WTC11 (cell line): ENCODE measurements at regions of chr5 and their contacts with region 1.

Region 1: GRCh38 chr5:36079200-36079761 is 12.6 kb upstream of the UGT3A2 start:
- DNase-seq: peak; percentile 31
- ATAC-seq: peak; percentile 99
- H3K4me3 Mint-ChIP-seq: peak overlapping the region; percentile 38
- H3K27ac Mint-ChIP-seq: peak overlapping the region; percentile 24
- H3K4me1 Mint-ChIP-seq: peaks cover 21% of the 10 kb centered on the region
- H3K27me3 Mint-ChIP-seq: no peaks in the 10 kb centered on the region; the same call in 1 of the 2 replicates
- CTCF ChIP-seq: peak; percentile 64

Region 2: GRCh38 chr5:35904443-35905132 is 174.7 kb before region 1 on chr5:
- CTCF ChIA-PET with region 1: no interaction called
- POLR2A ChIA-PET with region 1: no interaction called
- DNase-seq: no peak
- ATAC-seq: no peak
- H3K4me3 Mint-ChIP-seq: no peak overlapping the region
- H3K27ac Mint-ChIP-seq: no peak overlapping the region
- H3K4me1 Mint-ChIP-seq: peaks cover 10% of the 10 kb centered on the region
- H3K27me3 Mint-ChIP-seq: peaks cover 10% of the 10 kb centered on the region; the same call in 1 of the 2 replicates
- CTCF ChIP-seq: no peak

Region 3: DNA sequence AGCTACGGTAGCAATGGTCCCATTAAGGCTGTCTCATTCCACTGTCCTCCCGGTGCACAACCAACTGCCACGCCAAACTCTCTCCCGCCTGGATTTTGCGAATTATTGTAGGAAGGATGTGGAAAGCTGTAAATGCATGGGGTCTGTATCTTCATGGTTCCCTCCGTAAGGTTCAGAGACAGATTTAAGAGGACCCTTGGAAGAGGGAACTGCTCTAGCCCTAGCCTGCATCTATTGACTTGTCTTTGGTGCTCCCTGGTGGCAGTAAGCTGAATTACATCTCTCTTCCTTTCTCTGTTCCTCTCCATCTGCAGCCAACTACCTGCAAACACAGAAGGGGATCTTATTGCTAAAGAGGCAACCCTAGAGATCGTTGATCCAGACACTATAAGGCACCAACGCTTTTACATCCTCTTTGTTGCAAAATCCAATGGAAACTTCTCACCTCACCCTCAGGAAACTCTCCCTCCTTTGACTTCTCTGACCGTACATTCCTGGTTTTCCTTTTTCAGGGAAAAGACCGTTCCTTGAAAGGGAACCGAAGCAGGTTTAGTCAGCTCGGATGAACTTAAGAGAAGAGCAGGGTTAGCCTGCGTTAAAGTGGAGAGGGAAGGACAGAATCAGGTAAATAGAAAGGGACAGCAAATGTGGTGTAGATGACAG is 152.8 kb before region 1 on chr5:
- CTCF ChIA-PET with region 1: no interaction called
- POLR2A ChIA-PET with region 1: no interaction called
- DNase-seq: peak; percentile 58
- ATAC-seq: peak; percentile 85
- H3K4me3 Mint-ChIP-seq: peak overlapping the region; percentile 39
- H3K27ac Mint-ChIP-seq: no peak overlapping the region
- H3K4me1 Mint-ChIP-seq: peaks cover 10% of the 10 kb centered on the region
- H3K27me3 Mint-ChIP-seq: peaks cover 73% of the 10 kb centered on the region
- CTCF ChIP-seq: peak; percentile 93

Region 4: DNA sequence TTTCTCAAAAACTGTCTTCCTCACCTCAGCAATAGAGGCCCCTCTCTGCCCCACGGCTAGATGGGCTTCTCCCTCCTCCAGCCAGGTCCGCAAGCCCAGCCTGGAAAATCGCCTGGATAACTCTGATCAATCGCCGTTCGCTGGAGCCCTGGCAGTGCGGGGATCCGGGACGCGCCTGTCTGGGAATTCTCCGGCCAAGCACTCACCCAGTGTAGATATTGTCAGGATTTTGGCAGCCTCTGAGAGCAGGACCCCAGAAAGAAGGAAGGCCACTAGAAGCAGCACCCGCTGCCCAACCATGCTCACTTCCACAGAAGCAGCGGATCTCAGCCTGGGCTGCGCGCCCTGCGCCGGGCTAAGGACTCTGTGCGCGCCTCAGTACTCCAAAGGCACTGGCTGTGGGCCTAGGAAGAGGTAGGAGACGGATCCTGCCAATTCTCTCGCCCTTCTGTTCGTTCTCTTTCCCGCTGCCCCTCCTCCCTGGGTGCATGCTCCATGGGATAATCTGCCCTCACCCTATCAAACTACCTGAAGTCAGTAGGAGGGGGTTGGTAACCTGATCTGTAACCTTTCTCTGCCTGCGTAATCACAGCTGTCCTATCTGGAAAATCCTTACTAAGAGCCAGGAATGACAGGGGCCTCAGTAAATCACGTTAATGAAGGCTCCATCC is 88.2 kb before region 1 on chr5 and contains the start of gene UGT3A1:
- CTCF ChIA-PET with region 1: interaction called, 13 read pairs
- POLR2A ChIA-PET with region 1: no interaction called
- DNase-seq: peak; percentile 59
- ATAC-seq: peak; percentile 95
- H3K4me3 Mint-ChIP-seq: peak within 1 kb of the TSS; percentile 87
- H3K27ac Mint-ChIP-seq: no peak within 1 kb of the TSS
- H3K4me1 Mint-ChIP-seq: peaks cover 13% of the 10 kb centered on the region
- H3K27me3 Mint-ChIP-seq: peaks cover 39% of the 10 kb centered on the region
- CTCF ChIP-seq: no peak
- total RNA-seq, gene UGT3A1: 2.0 to 2.7 TPM (median 2.1 TPM) in 3 replicates

Region 5: GRCh38 chr5:36029914-36030313 is 49.4 kb before region 1 on chr5:
- CTCF ChIA-PET with region 1: no interaction called
- POLR2A ChIA-PET with region 1: no interaction called
- DNase-seq: no peak
- ATAC-seq: no peak
- H3K4me3 Mint-ChIP-seq: no peak overlapping the region
- H3K27ac Mint-ChIP-seq: no peak overlapping the region
- H3K4me1 Mint-ChIP-seq: no peaks in the 10 kb centered on the region
- H3K27me3 Mint-ChIP-seq: peaks cover 2% of the 10 kb centered on the region; the same call in 1 of the 2 replicates
- CTCF ChIP-seq: no peak

Region 6: DNA sequence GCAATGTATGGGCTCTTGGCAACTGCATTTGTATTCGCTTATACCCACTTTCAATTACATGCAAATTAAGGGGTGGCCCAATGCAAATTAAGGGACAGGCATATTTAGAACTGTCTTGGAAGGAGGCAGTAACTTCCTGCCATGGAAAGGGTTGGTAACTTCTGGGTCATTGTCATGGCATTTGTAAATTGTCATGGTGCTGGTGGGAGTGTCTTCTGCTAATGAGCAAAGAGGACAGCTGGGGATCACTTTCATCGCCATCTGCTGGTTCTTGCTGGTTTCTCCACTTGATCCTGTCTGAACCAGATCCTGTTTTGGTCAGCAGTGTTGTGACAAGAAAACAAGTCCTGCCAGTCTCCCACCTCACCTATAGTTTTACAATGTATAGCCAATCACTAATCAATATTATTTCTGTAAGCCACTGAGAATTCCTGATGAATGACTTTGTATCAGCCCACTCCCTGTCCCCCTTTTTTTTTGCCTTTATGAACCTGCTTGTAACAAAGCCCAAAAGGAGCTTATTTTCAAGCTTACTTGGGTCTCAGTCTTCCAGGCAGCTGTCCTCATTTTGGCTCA is 10.8 kb after region 1 on chr5:
- CTCF ChIA-PET with region 1: interaction called, 86 read pairs
- POLR2A ChIA-PET with region 1: interaction called, 3 read pairs
- DNase-seq: peak; percentile 56
- ATAC-seq: peak; percentile 95
- H3K4me3 Mint-ChIP-seq: no peak overlapping the region
- H3K27ac Mint-ChIP-seq: peak overlapping the region; percentile 74
- H3K4me1 Mint-ChIP-seq: peaks cover 4% of the 10 kb centered on the region; the same call in 1 of the 2 replicates
- H3K27me3 Mint-ChIP-seq: 0 out of 2 replicates have a peak, but pooled peaks cover under 1% of the 10 kb centered on the region
- CTCF ChIP-seq: no peak

Region 7: GRCh38 chr5:36151434-36152323 is 72.4 kb after region 1 on chr5 and contains the starts of genes LMBRD2 and SKP2:
- CTCF ChIA-PET with region 1: interaction called, 58 read pairs
- POLR2A ChIA-PET with region 1: interaction called, 6 read pairs
- DNase-seq: peak; percentile 97
- ATAC-seq: peak; percentile 99
- H3K4me3 Mint-ChIP-seq: peak within 1 kb of the TSS; percentile 86
- H3K27ac Mint-ChIP-seq: peak within 1 kb of the TSS; percentile 88
- H3K4me1 Mint-ChIP-seq: peaks cover 13% of the 10 kb centered on the region
- H3K27me3 Mint-ChIP-seq: no peaks in the 10 kb centered on the region
- CTCF ChIP-seq: no peak
- total RNA-seq, gene LMBRD2: 4.3 to 5.6 TPM (median 4.9 TPM) in 3 replicates
- total RNA-seq, gene SKP2: 64.2 to 68.0 TPM (median 66.4 TPM) in 3 replicates

Region 8: GRCh38 chr5:36193746-36194145 is 114.5 kb after region 1 on chr5:
- CTCF ChIA-PET with region 1: no interaction called
- POLR2A ChIA-PET with region 1: no interaction called
- DNase-seq: no peak
- ATAC-seq: no peak
- H3K4me3 Mint-ChIP-seq: no peak overlapping the region
- H3K27ac Mint-ChIP-seq: no peak overlapping the region
- H3K4me1 Mint-ChIP-seq: no peaks in the 10 kb centered on the region
- H3K27me3 Mint-ChIP-seq: 0 out of 2 replicates have a peak, but pooled peaks cover 3% of the 10 kb centered on the region
- CTCF ChIP-seq: no peak

Region 9: DNA sequence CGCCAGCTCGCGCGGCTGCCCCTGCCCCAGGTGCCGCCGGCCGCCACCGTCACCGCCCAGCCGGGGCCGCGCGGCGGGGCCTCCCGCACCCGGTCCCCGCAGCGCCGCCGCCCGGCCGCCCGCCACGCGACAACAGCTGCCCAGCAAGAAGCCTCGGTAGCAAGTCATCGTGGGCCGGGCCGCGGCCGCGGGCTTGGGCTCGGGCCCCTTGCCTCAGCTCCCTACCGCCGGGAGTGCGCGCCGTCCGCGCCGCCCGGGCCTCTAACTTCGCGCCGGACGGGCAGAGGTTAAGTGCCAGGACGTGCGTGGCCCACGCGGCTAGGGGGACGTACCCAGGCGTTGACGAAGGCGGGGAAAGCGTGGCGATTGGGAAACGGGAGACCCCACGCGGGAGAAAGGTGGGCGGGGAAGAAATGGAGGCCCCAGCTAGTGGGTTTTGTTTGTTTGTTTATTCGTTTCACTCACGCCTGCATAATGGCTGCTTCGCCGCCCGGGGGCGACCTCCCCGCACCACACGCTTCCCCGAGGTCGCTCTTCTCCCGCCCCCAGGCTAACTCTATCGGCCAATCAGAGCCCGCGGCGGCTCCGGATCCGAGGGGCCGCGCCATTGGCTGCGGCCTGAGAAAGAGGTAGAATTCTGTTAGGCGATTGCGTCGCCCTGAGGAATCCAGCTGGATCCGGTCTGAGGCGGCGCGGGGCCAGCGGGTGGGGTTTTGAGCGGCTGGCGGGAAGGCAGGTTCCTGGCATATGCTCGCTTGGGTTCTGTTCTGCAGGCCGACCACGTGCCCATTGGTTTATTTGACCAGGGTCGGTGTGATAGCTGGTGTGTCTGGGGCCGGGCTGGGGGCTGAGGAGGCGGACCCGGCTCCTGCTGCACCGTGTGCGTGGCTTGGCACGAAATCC is 162.6 kb after region 1 on chr5 and contains the start of gene NADK2:
- CTCF ChIA-PET with region 1: interaction called, 23 read pairs
- POLR2A ChIA-PET with region 1: interaction called, 4 read pairs
- DNase-seq: peak; percentile 96
- ATAC-seq: peak; percentile 90
- H3K4me3 Mint-ChIP-seq: peak within 1 kb of the TSS; percentile 77
- H3K27ac Mint-ChIP-seq: peak within 1 kb of the TSS; percentile 96
- H3K4me1 Mint-ChIP-seq: peaks cover 25% of the 10 kb centered on the region
- H3K27me3 Mint-ChIP-seq: peaks cover 30% of the 10 kb centered on the region
- CTCF ChIP-seq: peak; percentile 51
- total RNA-seq, gene NADK2: 11.7 to 18.2 TPM (median 17.0 TPM) in 3 replicates